Aorta (tissue), 5 donors: ENCODE measurements at regions of chr12 and their contacts with region 1.

Region 1: DNA sequence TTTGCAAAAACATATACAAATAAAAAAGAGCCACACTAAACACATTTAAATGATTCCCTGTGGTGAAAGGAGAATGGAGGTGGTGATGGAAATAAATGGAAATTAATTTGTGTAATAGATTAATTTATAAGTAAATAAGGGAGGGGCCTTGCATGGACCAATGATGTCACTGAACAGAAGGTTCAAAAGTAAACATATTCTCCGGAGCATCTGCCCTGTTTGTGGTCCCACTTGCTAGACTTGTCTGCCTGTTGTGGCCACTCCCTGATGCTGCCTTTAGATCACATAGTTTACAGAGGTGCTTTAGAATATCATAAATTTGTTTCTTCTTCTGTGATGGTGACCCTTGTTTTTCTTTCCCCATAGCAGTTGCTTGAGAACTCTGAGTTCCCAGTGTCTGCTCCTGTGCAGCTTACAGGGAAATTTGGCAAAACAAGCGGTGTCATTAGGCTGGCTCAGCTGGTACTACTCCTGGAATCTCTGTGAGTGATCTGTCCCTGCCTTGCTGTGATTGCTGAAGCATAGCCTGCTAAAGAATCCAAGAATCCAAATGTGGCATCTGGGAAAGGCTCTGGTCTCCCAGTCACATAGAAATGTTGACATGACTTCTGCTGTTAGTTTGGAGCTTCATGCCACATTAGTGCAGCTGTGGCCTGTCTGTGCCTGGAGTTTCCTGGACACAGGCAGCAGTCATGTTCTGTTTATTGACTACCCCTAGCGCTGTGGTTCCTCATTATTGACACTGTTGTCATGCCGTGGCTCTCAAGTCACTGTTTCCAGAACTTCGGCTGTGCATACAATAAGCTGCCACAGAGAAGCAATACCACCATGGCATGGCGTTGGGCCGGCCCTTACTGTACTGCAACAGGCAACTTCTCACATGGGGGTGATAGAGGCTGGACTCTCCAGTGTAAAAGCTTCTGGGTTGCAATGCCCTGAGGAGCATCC is 166.6 kb downstream of the MYRFL start:
- DNase-seq: no peak
- ATAC-seq: no peak
- H3K4me3 ChIP-seq: no peak overlapping the region
- H3K27ac ChIP-seq: peak overlapping the region in 1 of 2 donors; percentile 75
- H3K4me1 ChIP-seq: no peaks in the 10 kb centered on the region
- H3K27me3 ChIP-seq: no peaks in the 10 kb centered on the region

Region 2: GRCh38 chr12:70040141-70040540 is 48.5 kb after region 1 on chr12:
- intact Hi-C with region 1: loop called (anchors 5 kb)
- DNase-seq: no peak
- ATAC-seq: peak; percentile 79
- H3K4me3 ChIP-seq: no peak overlapping the region
- H3K27ac ChIP-seq: no peak overlapping the region
- H3K4me1 ChIP-seq: peaks cover 0 to 3% of the 10 kb centered on the region in 2 donors
- H3K27me3 ChIP-seq: no peaks in the 10 kb centered on the region

Region 3: GRCh38 chr12:70317781-70318180 is 326.2 kb after region 1 on chr12:
- intact Hi-C with region 1: loop called in 1 of 2 experiments (anchors 10 kb)
- DNase-seq: no peak
- ATAC-seq: no peak
- H3K4me3 ChIP-seq: no peak overlapping the region
- H3K27ac ChIP-seq: no peak overlapping the region
- H3K4me1 ChIP-seq: no peaks in the 10 kb centered on the region
- H3K27me3 ChIP-seq: no peaks in the 10 kb centered on the region

Region 4: GRCh38 chr12:70353780-70354660 is 362.4 kb after region 1 on chr12:
- intact Hi-C with region 1: no loop called
- DNase-seq: no peak
- ATAC-seq: no peak
- H3K4me3 ChIP-seq: no peak overlapping the region
- H3K27ac ChIP-seq: no peak overlapping the region
- H3K4me1 ChIP-seq: no peaks in the 10 kb centered on the region
- H3K27me3 ChIP-seq: no peaks in the 10 kb centered on the region